K562 (cell line): ENCODE measurements at regions of chr6 and their contacts with region 1.

Region 1: GRCh38 chr6:37459981-37460800 is 27.2 kb downstream of the CMTR1 start:
- DNase-seq: peak; percentile 95 to 98 (median 96)
- ATAC-seq: peak; percentile 96
- H3K4me3 ChIP-seq: no peak overlapping the region
- H3K27ac ChIP-seq: peak overlapping the region; percentile 65
- H3K4me1 ChIP-seq: peaks cover 5 to 26% of the 10 kb centered on the region in 2 experiments
- H3K27me3 ChIP-seq: no peaks in the 10 kb centered on the region
- CTCF ChIP-seq: no peak
- EP300 ChIP-seq: peak; percentile 91
- POLR2A ChIP-seq: no peak
- RAD21 ChIP-seq: peak; percentile 11 to 32; a peak in 1 of 4 replicates

Region 2: GRCh38 chr6:37399795-37400490 is 60.2 kb before region 1 on chr6:
- CTCF ChIA-PET with region 1: no interaction called
- POLR2A ChIA-PET with region 1: no interaction called
- in situ Hi-C with region 1: no loop called
- intact Hi-C with region 1: loop called (anchors 2 kb)
- DNase-seq: peak in 2 of 4 experiments; percentile 47 to 86
- ATAC-seq: peak; percentile 74
- H3K4me3 ChIP-seq: no peak overlapping the region
- H3K27ac ChIP-seq: no peak overlapping the region
- H3K4me1 ChIP-seq: peaks cover 21 to 30% of the 10 kb centered on the region in 2 experiments
- H3K27me3 ChIP-seq: no peaks in the 10 kb centered on the region
- CTCF ChIP-seq: no peak
- EP300 ChIP-seq: peak; percentile 65
- POLR2A ChIP-seq: no peak
- RAD21 ChIP-seq: no peak

Region 3: GRCh38 chr6:37432916-37433656 is 27.1 kb before region 1 on chr6 and contains the start of gene CMTR1:
- CTCF ChIA-PET with region 1: no interaction called
- POLR2A ChIA-PET with region 1: interaction called, 15 read pairs
- in situ Hi-C with region 1: no loop called
- intact Hi-C with region 1: no loop called
- DNase-seq: peak; percentile 97 to 99 (median 99)
- ATAC-seq: peak; percentile 95
- H3K4me3 ChIP-seq: peak within 1 kb of the TSS; percentile 88
- H3K27ac ChIP-seq: peak within 1 kb of the TSS; percentile 83
- H3K4me1 ChIP-seq: peaks cover 14 to 22% of the 10 kb centered on the region in 2 experiments
- H3K27me3 ChIP-seq: no peaks in the 10 kb centered on the region
- CTCF ChIP-seq: peak in 1 of 3 experiments; percentile 3; a peak in 2 of 6 replicates
- EP300 ChIP-seq: peak; percentile 36; the same call in 1 of the 2 replicates
- POLR2A ChIP-seq: peak; percentile 85
- RAD21 ChIP-seq: peak in 1 of 2 experiments; percentile 22; a peak in 2 of 4 replicates
- polyA plus RNA-seq, gene CMTR1: 2.9 to 5.5 TPM

Region 4: GRCh38 chr6:37473397-37474095 is 13.4 kb after region 1 on chr6:
- CTCF ChIA-PET with region 1: no interaction called
- POLR2A ChIA-PET with region 1: interaction called, 10 read pairs
- in situ Hi-C with region 1: no loop called
- intact Hi-C with region 1: no loop called
- DNase-seq: no peak
- ATAC-seq: no peak
- H3K4me3 ChIP-seq: no peak overlapping the region
- H3K27ac ChIP-seq: no peak overlapping the region
- H3K4me1 ChIP-seq: peaks cover 0 to 5% of the 10 kb centered on the region in 2 experiments; a peak in 3 of 5 replicates
- H3K27me3 ChIP-seq: no peaks in the 10 kb centered on the region
- CTCF ChIP-seq: no peak
- EP300 ChIP-seq: no peak
- POLR2A ChIP-seq: no peak
- RAD21 ChIP-seq: no peak